ENCODE measurements at regions of chr2 and their contacts with region 1.

Region 1: GRCh38 chr2:191637182-191638078 is 40.5 kb upstream of the NABP1 start:
- DNase-seq: no peak
- H3K4me3 ChIP-seq: no peak overlapping the region
- CTCF ChIP-seq: no peak
- POLR2A ChIP-seq: no peak

Region 2: GRCh38 chr2:191713837-191714236 is 76.4 kb after region 1 on chr2:
- intact Hi-C with region 1: no loop called
- DNase-seq: no peak
- H3K4me3 ChIP-seq: no peak overlapping the region
- CTCF ChIP-seq: no peak
- POLR2A ChIP-seq: no peak

Region 3: GRCh38 chr2:191942090-191942738 is 304.8 kb after region 1 on chr2:
- intact Hi-C with region 1: loop called (anchors 5 kb)
- DNase-seq: no peak
- H3K4me3 ChIP-seq: no peak overlapping the region
- CTCF ChIP-seq: no peak
- POLR2A ChIP-seq: no peak

Measured in lower leg skin (tissue), 4 donors.